HCT116 (cell line): ENCODE measurements at regions of chr22 and their contacts with region 1.

Region 1: DNA sequence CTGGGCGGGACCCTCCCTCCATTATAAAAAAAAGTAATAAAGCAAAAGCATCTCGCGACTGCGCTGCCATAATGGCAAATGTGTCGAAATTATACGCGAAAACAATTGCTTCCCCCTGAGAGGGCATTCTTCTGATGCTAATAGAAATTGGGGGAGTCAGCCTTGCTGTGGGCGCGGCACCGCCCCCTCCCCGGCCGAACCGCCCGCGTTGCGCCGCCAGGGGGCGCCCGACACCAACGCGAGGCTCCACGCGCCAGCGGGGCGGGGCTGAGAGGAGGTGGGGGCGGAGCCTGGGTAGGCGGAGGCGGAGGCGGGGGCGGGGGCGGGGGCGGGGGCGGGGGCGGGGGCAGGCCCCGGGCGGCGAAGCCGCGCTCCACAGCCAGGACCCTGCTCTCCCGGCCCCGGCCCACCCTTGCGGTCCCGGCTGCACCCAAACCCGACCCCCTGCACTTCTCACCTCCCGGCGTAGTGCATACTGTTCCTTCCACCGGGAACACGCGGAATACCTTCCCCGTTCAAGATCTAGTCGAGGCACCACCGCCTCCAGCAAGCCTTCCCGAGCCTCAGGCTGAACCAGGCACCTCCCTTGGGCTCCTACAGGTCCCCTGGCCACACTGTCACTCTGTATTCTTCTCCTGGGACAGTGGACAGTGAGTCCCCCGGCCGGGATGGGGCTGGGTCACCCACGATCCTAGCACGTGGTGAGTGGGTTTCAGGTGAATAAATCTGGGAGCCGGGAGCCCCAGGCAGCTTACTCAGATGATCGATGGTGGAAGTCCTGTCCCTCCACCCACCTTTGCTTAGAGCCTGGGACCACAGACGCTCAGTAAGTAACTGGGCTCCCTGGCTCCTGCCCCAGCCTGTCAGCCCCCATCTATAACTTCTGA is 15.5 kb upstream of the UPK3A start:
- DNase-seq: no peak
- ATAC-seq: peak; percentile 87
- H3K4me3 ChIP-seq: peak overlapping the region; percentile 55 to 72
- H3K27ac ChIP-seq: no peak overlapping the region; the same call in 1 of the 2 replicates
- H3K4me1 ChIP-seq: peaks cover 6 to 13% of the 10 kb centered on the region in 2 experiments
- H3K27me3 ChIP-seq: no peaks in the 10 kb centered on the region
- CTCF ChIP-seq: peak; percentile 78 to 82 (median 79); a peak in 5 of 6 replicates
- POLR2A ChIP-seq: no peak
- RAD21 ChIP-seq: peak; percentile 89

Region 2: GRCh38 chr22:44988671-44989070 is 280.5 kb before region 1 on chr22:
- CTCF ChIA-PET with region 1: no interaction called
- POLR2A ChIA-PET with region 1: no interaction called
- RAD21 ChIA-PET with region 1: no interaction called
- intact Hi-C with region 1: no loop called
- DNase-seq: no peak
- ATAC-seq: peak; percentile 72
- H3K4me3 ChIP-seq: no peak overlapping the region
- H3K27ac ChIP-seq: no peak overlapping the region
- H3K4me1 ChIP-seq: no peaks in the 10 kb centered on the region
- H3K27me3 ChIP-seq: peaks cover 17% of the 10 kb centered on the region
- CTCF ChIP-seq: peak; percentile 34 to 39 (median 36); a peak in 3 of 6 replicates
- POLR2A ChIP-seq: no peak
- RAD21 ChIP-seq: peak; percentile 55

Region 3: GRCh38 chr22:45435544-45436139 is 166.4 kb after region 1 on chr22:
- CTCF ChIA-PET with region 1: interaction called, 6 read pairs
- POLR2A ChIA-PET with region 1: no interaction called
- RAD21 ChIA-PET with region 1: interaction called in 1 of 2 experiments, 8 read pairs
- intact Hi-C with region 1: loop called (anchors 1 kb)
- DNase-seq: peak; percentile 60
- ATAC-seq: peak; percentile 97
- H3K4me3 ChIP-seq: no peak overlapping the region
- H3K27ac ChIP-seq: peak overlapping the region; percentile 31; the same call in 1 of the 2 replicates
- H3K4me1 ChIP-seq: peaks cover 4 to 8% of the 10 kb centered on the region in 2 experiments; a peak in 2 of 4 replicates
- H3K27me3 ChIP-seq: no peaks in the 10 kb centered on the region
- CTCF ChIP-seq: peak; percentile 89 to 97 (median 96)
- POLR2A ChIP-seq: no peak
- RAD21 ChIP-seq: peak; percentile 84